ENCODE measurements at regions of chr2 and their contacts with region 1.

Region 1: DNA sequence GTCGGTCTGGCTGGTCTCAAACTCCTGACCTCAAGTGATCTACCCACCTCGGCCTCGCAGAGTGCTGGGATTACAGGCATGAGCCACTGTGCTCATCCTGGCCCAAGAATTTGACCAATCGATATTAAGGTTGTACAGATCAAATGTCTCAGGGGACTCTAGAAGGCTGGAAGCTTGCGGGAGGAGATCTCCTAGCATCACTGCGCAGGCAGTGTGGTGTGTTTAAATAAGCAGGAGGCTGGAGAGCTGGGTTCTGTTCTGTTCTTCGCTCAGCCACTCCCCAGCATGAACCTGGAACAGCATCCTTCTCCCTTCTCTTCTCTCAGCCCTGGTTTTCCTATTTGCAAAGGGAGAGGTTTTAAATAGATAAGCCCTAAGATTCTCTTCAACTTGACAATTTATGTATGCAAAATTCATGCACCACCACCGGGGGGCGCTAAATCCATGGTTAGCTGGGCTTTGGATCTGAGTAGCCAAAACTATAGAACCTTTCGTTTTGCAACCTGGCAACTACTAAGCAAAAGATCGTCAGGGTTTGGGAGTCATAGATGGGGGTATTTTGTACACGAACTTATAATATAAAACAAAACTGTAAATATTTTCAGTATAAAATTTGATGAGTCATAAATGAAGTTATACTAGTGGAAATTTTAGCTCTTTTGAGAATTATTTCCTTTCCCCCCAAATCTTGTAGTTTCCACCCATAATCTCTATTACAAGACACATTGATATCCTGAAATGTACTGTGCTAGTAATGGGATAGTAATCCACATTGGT is 60.6 kb downstream of the SLC16A14 start:
- DNase-seq: peak; percentile 46
- ATAC-seq: peak; percentile 80
- H3K4me3 ChIP-seq: no peak overlapping the region
- H3K27ac ChIP-seq: no peak overlapping the region
- H3K4me1 ChIP-seq: peaks cover 2 to 7% of the 10 kb centered on the region in 2 experiments; a peak in 2 of 4 replicates
- H3K27me3 ChIP-seq: no peaks in the 10 kb centered on the region
- CTCF ChIP-seq: peak; percentile 75 to 93 (median 88)
- POLR2A ChIP-seq: no peak
- RAD21 ChIP-seq: peak; percentile 92

Region 2: GRCh38 chr2:230097841-230098240 is 89.7 kb after region 1 on chr2:
- CTCF ChIA-PET with region 1: no interaction called
- POLR2A ChIA-PET with region 1: no interaction called
- RAD21 ChIA-PET with region 1: no interaction called
- intact Hi-C with region 1: no loop called
- DNase-seq: no peak
- ATAC-seq: no peak
- H3K4me3 ChIP-seq: no peak overlapping the region
- H3K27ac ChIP-seq: no peak overlapping the region
- H3K4me1 ChIP-seq: no peaks in the 10 kb centered on the region
- H3K27me3 ChIP-seq: no peaks in the 10 kb centered on the region
- CTCF ChIP-seq: no peak
- POLR2A ChIP-seq: no peak
- RAD21 ChIP-seq: no peak

Region 3: DNA sequence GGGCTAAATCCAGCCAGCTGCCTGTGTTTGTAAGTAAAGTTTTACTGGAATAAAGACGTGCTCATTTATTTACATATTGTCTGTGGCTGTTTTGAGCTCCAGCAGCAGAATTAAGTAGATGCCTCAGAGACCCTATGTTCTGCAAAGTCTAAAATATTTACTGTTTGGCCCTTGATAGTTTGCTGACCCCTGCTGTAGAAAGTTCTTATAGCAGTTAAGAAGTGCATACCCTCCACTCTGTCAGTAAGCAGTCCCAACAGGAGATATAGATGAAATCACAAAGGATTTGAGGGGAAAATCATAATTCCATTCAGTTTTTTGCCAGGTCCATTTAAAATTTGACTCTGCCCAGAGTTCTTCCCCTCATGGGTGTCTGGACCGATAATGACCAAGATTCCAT is 806.5 kb after region 1 on chr2:
- CTCF ChIA-PET with region 1: no interaction called
- POLR2A ChIA-PET with region 1: no interaction called
- RAD21 ChIA-PET with region 1: no interaction called
- intact Hi-C with region 1: loop called (anchors 10 kb)
- DNase-seq: no peak
- ATAC-seq: peak; percentile 76
- H3K4me3 ChIP-seq: no peak overlapping the region
- H3K27ac ChIP-seq: no peak overlapping the region
- H3K4me1 ChIP-seq: no peaks in the 10 kb centered on the region
- H3K27me3 ChIP-seq: no peaks in the 10 kb centered on the region
- CTCF ChIP-seq: peak; percentile 36 to 71 (median 56); a peak in 5 of 6 replicates
- POLR2A ChIP-seq: no peak
- RAD21 ChIP-seq: peak; percentile 72

Measured in HCT116 (cell line).